ENCODE measurements at regions of chr7 and their contacts with region 1.

Region 1: DNA sequence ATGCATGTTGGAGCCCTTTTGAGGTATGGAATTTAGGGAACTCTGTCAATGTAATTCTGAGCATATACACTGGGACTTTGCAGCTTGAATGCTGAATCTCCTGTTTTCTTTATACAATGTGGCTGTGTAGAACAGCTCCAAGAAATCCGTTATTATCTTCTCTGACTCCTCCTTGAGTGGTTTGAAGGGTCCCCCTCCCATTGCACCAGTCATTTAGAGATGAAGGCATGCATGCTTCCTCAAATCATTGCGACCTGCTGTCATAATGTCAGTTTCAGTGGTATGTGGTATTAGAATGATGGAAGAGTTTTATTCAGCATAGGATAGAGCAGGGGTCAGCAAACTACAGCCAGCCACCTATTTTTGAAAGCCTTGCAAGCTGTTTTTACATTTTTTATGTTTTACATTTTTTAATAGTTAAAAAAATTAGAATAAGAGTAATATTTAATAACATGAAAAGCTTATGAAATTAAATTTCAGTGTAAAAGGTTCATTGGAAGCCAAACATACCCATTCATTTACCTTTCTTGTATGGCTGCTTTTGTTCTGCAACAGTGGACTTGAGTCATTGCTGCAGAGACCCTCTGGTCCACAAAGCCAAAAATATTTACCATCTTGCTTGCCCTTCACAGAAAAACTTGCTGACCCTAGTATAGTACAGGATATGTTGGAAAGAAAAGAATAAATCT is 8.1 kb downstream of the STK17A start:
- DNase-seq: no peak
- H3K4me3 ChIP-seq: no peak overlapping the region
- H3K27ac ChIP-seq: no peak overlapping the region
- H3K4me1 ChIP-seq: peaks cover 0 to 41% of the 10 kb centered on the region in 2 donors
- H3K27me3 ChIP-seq: no peaks in the 10 kb centered on the region
- CTCF ChIP-seq: no peak
- POLR2A ChIP-seq: no peak

Region 2: GRCh38 chr7:43351683-43352082 is 239.3 kb before region 1 on chr7:
- intact Hi-C with region 1: no loop called
- DNase-seq: no peak
- H3K4me3 ChIP-seq: no peak overlapping the region
- H3K27ac ChIP-seq: no peak overlapping the region
- H3K4me1 ChIP-seq: no peaks in the 10 kb centered on the region
- H3K27me3 ChIP-seq: no peaks in the 10 kb centered on the region
- CTCF ChIP-seq: no peak
- POLR2A ChIP-seq: no peak

Region 3: DNA sequence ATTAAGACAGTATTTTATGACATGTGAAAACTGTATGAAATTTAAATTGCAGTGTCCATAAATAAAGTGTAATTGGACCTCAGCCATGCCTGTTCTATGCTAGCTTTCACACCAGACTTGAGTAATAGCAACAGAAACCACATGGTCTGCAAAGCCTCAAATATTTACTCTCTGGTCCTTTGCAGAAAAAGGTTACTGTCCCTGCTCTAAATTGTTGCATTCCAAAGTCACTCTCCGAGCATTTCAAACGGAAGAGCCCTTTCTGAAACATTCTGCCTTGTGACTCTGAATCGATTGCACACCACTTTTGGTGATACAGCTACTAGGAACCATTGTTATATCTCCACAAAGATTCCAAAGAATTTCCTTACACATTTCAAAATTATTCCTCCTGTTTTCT is 89.1 kb before region 1 on chr7:
- intact Hi-C with region 1: no loop called
- DNase-seq: no peak
- H3K4me3 ChIP-seq: no peak overlapping the region
- H3K27ac ChIP-seq: no peak overlapping the region
- H3K4me1 ChIP-seq: no peaks in the 10 kb centered on the region
- H3K27me3 ChIP-seq: no peaks in the 10 kb centered on the region
- CTCF ChIP-seq: no peak
- POLR2A ChIP-seq: no peak

Region 4: GRCh38 chr7:43647673-43648472 is 56.9 kb after region 1 on chr7:
- intact Hi-C with region 1: loop called in 1 of 2 experiments (anchors 10 kb)
- DNase-seq: peak; percentile 68 to 92 (median 85)
- H3K4me3 ChIP-seq: no peak overlapping the region
- H3K27ac ChIP-seq: peak overlapping the region; percentile 50 to 93 (median 91)
- H3K4me1 ChIP-seq: peaks cover 29 to 54% of the 10 kb centered on the region in 2 donors
- H3K27me3 ChIP-seq: no peaks in the 10 kb centered on the region
- CTCF ChIP-seq: no peak
- POLR2A ChIP-seq: peak in 1 of 2 donors; percentile 48

Measured in adrenal gland (tissue), 19 donors.